Sciatic nerve (tissue), 2 donors: ENCODE measurements at regions of chr2 and their contacts with region 1.

Region 1: GRCh38 chr2:151051574-151052220 is 210.0 kb downstream of the RBM43 start:
- DNase-seq: no peak
- ATAC-seq: peak; percentile 55

Region 2: DNA sequence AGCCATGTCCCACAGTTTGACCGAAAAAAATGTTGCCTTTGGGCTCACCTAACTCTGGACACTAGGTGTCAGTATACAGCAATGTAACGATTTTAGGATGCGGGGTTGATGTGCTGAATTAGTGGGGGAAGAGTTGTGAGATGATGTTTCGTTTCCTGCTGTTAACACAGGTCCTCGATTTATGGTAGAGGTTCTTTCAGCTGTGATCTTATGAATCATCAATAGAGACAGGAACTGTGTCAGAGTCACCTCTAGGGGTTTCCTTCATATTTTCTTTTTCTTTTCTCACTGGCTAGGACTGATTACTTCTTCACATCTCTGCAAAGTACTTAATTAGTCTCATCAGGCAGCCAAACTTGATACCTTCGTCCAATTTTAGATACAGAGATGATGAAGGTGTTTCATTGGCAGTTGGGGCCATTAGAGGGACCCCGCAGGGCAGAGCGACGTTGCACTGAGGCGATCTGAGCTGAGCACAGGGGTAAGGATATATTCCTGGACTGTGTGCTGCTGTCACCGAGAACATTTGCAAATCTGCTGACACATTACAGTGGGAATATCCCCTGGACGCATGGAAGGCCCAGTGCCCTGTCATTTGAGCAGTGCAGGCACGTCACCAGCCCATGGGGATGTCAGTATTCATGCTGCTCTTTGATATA is 1453.9 kb before region 1 on chr2:
- intact Hi-C with region 1: loop called (anchors 10 kb)
- DNase-seq: no peak
- ATAC-seq: peak; percentile 93

Region 3: GRCh38 chr2:150903461-150903860 is 148.2 kb before region 1 on chr2:
- intact Hi-C with region 1: no loop called
- DNase-seq: no peak
- ATAC-seq: no peak